OCI-LY7 (cell line): ENCODE measurements at regions of chr13 and their contacts with region 1.

Region 1: GRCh38 chr13:113296842-113297369 is at the start of gene LAMP1:
- DNase-seq: peak; percentile 96
- H3K4me3 ChIP-seq: peak within 1 kb of the TSS; percentile 90
- H3K27ac ChIP-seq: peak within 1 kb of the TSS; percentile 63
- H3K4me1 ChIP-seq: peaks cover 11% of the 10 kb centered on the region
- CTCF ChIP-seq: no peak
- total RNA-seq, gene LAMP1: 9.3 and 12.2 TPM in 2 replicates

Region 2: DNA sequence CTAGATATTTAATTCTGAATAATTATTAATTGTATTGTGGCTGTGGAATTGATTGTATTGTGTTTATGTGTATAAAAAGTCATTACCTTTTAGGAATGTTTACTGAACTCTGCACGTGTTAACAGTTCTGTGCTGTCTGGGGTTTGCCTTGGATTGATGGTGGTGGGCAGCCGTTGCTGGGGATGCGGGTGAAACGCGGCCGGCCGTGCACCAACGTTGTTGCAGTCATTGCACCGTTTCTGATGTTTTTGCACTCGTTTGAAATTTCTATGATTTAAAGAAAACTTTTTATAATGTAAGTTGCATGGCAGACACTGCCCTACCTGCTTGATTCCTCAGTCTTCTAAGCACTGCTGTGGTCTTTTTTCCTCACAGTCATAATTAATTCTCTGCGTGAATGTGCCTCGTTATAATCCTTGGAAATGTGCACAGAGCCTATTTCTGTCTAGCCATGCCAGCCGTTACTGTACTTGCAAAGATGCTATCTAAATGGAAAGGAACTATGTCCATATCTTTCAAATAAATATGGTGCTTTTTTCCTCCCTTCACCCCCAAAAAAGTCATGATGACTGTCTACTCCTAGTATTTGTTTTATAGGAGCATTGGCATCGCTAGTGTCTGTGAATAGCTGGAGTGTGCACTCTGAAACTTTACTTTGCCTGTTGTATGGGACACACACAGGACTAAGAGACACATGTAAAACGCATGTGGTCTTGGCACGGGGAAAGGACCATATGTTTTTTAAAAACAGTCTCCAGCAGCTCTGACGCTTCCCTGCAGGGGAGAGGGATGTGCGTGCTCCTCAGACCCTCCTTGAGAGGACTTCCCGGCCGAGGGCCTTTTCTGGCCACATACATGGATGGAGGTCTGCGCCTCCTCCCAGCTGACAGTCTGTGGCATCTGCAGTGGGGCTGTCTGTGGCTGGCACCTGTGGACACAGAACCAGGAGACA is 368.6 kb before region 1 on chr13:
- CTCF ChIA-PET with region 1: no interaction called
- POLR2A ChIA-PET with region 1: no interaction called
- intact Hi-C with region 1: no loop called
- DNase-seq: no peak
- H3K4me3 ChIP-seq: no peak overlapping the region
- H3K27ac ChIP-seq: no peak overlapping the region
- H3K4me1 ChIP-seq: no peaks in the 10 kb centered on the region
- CTCF ChIP-seq: no peak

Region 3: GRCh38 chr13:113208424-113209335 is 88.2 kb before region 1 on chr13 and contains the start of gene PCID2:
- CTCF ChIA-PET with region 1: no interaction called
- POLR2A ChIA-PET with region 1: no interaction called
- intact Hi-C with region 1: loop called (anchors 2 kb)
- DNase-seq: peak; percentile 88
- H3K4me3 ChIP-seq: peak within 1 kb of the TSS; percentile 94
- H3K27ac ChIP-seq: peak within 1 kb of the TSS; percentile 84
- H3K4me1 ChIP-seq: peaks cover 22% of the 10 kb centered on the region
- CTCF ChIP-seq: no peak
- total RNA-seq, gene PCID2: 38.3 and 41.9 TPM in 2 replicates

Region 4: DNA sequence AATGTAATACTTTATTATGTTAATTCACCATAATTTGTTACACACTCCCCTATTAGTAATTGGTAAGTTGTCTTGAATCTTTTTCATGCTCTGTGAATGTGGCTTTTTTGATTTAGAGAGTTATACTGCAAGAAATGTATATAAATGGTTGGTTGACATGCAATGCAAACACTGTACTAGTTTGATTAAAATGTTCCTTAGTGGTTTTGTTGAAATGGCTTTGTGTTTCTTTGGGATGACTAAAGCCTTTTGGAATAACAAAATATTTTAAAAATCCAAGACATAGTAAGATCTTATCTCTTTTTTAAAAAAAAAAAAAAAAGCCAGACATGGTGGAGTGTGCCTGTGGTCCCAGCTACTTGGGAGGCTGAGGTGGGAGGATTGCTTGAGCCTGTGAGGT is 10.6 kb after region 1 on chr13:
- CTCF ChIA-PET with region 1: no interaction called
- POLR2A ChIA-PET with region 1: no interaction called
- intact Hi-C with region 1: no loop called
- DNase-seq: no peak
- H3K4me3 ChIP-seq: no peak overlapping the region
- H3K27ac ChIP-seq: no peak overlapping the region
- H3K4me1 ChIP-seq: no peaks in the 10 kb centered on the region
- CTCF ChIP-seq: no peak

Region 5: GRCh38 chr13:113393563-113394338 is 96.8 kb after region 1 on chr13:
- CTCF ChIA-PET with region 1: no interaction called
- POLR2A ChIA-PET with region 1: no interaction called
- intact Hi-C with region 1: loop called (anchors 5 kb)
- DNase-seq: peak; percentile 84
- H3K4me3 ChIP-seq: peak overlapping the region; percentile 77
- H3K27ac ChIP-seq: peak overlapping the region; percentile 17
- H3K4me1 ChIP-seq: peaks cover 5% of the 10 kb centered on the region
- CTCF ChIP-seq: peak; percentile 63

Region 6: GRCh38 chr13:113490496-113491417 is 193.9 kb after region 1 on chr13 and contains the start of gene DCUN1D2:
- CTCF ChIA-PET with region 1: no interaction called
- POLR2A ChIA-PET with region 1: no interaction called
- intact Hi-C with region 1: loop called (anchors 1 kb)
- DNase-seq: peak; percentile 71
- H3K4me3 ChIP-seq: peak within 1 kb of the TSS; percentile 82
- H3K27ac ChIP-seq: no peak within 1 kb of the TSS
- H3K4me1 ChIP-seq: peaks cover 42% of the 10 kb centered on the region
- CTCF ChIP-seq: no peak
- total RNA-seq, gene DCUN1D2: 9.2 and 13.4 TPM in 2 replicates